BJ (cell line): ENCODE measurements at regions of chr6 and their contacts with region 1.

Region 1: GRCh38 chr6:125173341-125174095 is 19.9 kb downstream of the TPD52L1 start:
- DNase-seq: no peak
- H3K4me3 ChIP-seq: no peak overlapping the region
- H3K27me3 ChIP-seq: no peaks in the 10 kb centered on the region
- CTCF ChIP-seq: no peak

Region 2: GRCh38 chr6:124881898-124882579 is 291.5 kb before region 1 on chr6:
- CTCF ChIA-PET with region 1: no interaction called
- POLR2A ChIA-PET with region 1: no interaction called
- DNase-seq: no peak
- H3K4me3 ChIP-seq: no peak overlapping the region
- H3K27me3 ChIP-seq: no peaks in the 10 kb centered on the region
- CTCF ChIP-seq: peak; percentile 18; the same call in 1 of the 2 replicates

Region 3: GRCh38 chr6:125153391-125154117 is 20.0 kb before region 1 on chr6 and contains the start of gene TPD52L1:
- CTCF ChIA-PET with region 1: interaction called, 13 read pairs
- POLR2A ChIA-PET with region 1: no interaction called
- DNase-seq: no peak
- H3K4me3 ChIP-seq: peak within 1 kb of the TSS; percentile 56
- H3K27me3 ChIP-seq: no peaks in the 10 kb centered on the region; the same call in 1 of the 2 replicates
- CTCF ChIP-seq: peak; percentile 96
- polyA plus RNA-seq, gene TPD52L1: 155 and 163 TPM in 2 replicates

Region 4: DNA sequence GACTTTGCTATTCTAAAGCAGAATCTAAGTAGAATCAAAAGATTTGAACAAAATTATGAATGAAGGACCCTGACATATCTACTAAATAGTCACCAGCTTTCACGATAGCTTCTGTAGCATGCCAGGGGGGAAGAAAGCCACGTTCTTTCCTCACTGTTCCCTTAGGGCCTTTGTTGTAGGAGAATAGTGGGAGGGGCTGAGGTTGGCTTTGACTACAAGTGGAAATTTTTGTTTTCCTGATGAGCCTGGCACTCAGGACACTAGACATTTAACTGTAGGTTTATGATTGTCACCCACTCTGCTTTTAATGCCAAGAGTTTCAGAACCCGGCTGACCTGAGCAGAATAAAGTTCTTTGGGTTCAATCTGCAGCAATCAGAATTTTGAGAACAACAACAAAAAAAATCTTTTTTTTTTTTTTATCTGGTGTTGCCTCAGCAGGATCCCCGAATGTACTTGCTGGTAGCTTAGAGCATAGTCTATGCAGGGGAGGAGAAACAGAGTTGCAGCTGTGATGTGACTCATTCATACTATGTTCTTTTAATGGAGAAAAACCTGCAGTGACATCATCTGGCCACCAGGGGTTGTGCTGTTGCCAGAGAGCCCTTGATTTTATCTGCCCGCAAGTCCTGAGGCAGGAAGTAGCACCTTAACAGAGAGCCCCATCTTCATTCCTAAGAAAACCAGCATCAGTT is 18.5 kb after region 1 on chr6:
- CTCF ChIA-PET with region 1: interaction called, 15 read pairs
- POLR2A ChIA-PET with region 1: interaction called, 3 read pairs
- DNase-seq: no peak
- H3K4me3 ChIP-seq: no peak overlapping the region
- H3K27me3 ChIP-seq: no peaks in the 10 kb centered on the region
- CTCF ChIP-seq: peak; percentile 67

Region 5: GRCh38 chr6:125262016-125263013 is 88.8 kb after region 1 on chr6:
- CTCF ChIA-PET with region 1: no interaction called
- POLR2A ChIA-PET with region 1: no interaction called
- DNase-seq: peak; percentile 59
- H3K4me3 ChIP-seq: no peak overlapping the region
- H3K27me3 ChIP-seq: no peaks in the 10 kb centered on the region
- CTCF ChIP-seq: no peak